Breast epithelium (tissue), 4 donors: ENCODE measurements at regions of chrX and their contacts with region 1.

Region 1: GRCh38 chrX:31181377-31182000 is 109.6 kb upstream of the FTHL17 start:
- DNase-seq: no peak
- H3K4me3 ChIP-seq: no peak overlapping the region
- H3K27ac ChIP-seq: no peak overlapping the region
- H3K4me1 ChIP-seq: no peaks in the 10 kb centered on the region
- H3K27me3 ChIP-seq: peaks cover 0 to 9% of the 10 kb centered on the region in 2 donors
- CTCF ChIP-seq: no peak
- POLR2A ChIP-seq: no peak

Region 2: DNA sequence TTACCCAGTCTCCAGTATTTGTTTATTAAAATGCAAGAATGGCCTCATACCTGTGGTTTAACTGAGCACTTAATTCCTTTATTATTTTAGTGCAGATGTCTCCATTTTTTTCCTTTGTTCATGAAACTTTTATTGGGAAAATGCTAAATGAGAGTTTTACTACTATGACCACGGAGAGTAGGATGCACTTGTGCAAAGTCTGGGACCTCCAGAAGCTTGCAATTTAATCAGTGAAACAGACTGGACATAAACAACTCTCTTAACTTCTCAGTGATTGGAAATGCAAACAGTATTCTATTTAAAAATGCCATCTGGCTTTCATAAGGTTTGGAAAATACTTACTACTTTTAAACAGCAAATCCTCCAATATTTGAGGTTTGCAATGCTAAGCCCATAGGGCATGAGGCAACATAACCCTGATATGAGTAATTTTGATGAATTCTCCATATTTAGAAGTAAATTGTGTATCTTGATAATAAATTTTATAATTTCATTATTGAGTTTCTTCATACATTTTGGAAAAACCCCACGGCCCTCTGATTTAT is 1684.8 kb before region 1 on chrX:
- intact Hi-C with region 1: no loop called
- DNase-seq: no peak
- H3K4me3 ChIP-seq: no peak overlapping the region
- H3K27ac ChIP-seq: no peak overlapping the region
- H3K4me1 ChIP-seq: no peaks in the 10 kb centered on the region
- H3K27me3 ChIP-seq: peaks cover 0 to 10% of the 10 kb centered on the region in 2 donors
- CTCF ChIP-seq: no peak
- POLR2A ChIP-seq: no peak

Region 3: GRCh38 chrX:30673127-30673796 is 508.2 kb before region 1 on chrX:
- intact Hi-C with region 1: no loop called
- DNase-seq: no peak
- H3K4me3 ChIP-seq: no peak overlapping the region
- H3K27ac ChIP-seq: no peak overlapping the region
- H3K4me1 ChIP-seq: no peaks in the 10 kb centered on the region
- H3K27me3 ChIP-seq: peaks cover 0 to 8% of the 10 kb centered on the region in 2 donors
- CTCF ChIP-seq: no peak
- POLR2A ChIP-seq: no peak

Region 4: DNA sequence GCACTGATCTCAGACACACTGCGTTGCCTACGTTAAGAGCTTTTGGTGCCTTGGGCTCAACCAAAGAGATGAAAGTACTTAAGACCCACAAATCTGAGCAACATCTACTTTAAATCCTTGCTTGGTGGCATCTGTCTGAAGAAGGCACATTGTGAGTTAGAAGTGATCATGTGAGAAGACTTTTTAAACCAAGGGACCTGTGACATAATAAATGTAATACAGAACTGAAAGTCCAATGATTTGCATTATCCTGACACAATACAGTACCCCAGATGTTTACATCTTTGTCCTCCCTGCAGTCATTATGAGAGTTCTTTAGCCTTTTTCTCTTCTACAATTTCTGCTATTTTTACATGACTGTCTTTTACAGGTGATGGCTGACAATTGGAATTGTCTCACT is 12.9 kb before region 1 on chrX:
- intact Hi-C with region 1: loop called (anchors 1 kb)
- DNase-seq: no peak
- H3K4me3 ChIP-seq: no peak overlapping the region
- H3K27ac ChIP-seq: no peak overlapping the region
- H3K4me1 ChIP-seq: no peaks in the 10 kb centered on the region
- H3K27me3 ChIP-seq: peaks cover 0 to 29% of the 10 kb centered on the region in 2 donors
- CTCF ChIP-seq: no peak
- POLR2A ChIP-seq: no peak